ENCODE measurements at regions of chr11 and their contacts with region 1.

Region 1: DNA sequence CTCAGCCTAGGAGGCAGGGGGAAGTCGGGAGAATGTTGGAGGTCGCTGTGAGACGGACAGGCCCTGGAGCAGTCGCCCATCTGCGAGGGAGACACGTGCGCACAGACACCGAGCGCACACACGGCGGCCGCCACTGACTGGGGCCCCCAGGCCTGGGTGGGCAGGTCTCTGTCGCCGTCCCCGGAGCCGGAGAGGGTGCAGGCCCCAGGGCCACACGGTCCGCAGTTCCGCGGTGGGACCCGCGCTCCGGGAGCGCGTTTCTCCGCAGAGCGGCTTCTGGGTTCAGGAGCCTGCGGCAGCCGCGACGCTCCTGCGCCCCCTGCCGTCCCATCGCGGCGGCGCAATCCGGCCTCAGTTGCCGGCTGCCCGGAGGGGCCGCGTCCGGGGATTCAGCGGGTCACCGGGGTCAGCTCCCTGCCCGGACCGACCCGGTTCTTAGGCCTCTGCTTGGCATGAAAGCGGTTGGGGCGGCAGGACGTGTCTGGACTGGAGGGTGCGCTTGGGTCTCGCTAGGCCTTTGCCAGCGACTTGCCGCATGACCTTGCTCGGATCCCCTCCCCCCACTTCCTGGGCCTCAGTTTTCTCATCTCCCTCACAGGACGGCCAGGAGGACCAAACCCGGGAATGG is 31.2 kb downstream of the PDE2A start:
- DNase-seq: peak; percentile 42 to 72 (median 61)
- H3K4me3 ChIP-seq: peak overlapping the region in 2 of 4 donors; percentile 67 to 69
- H3K27ac ChIP-seq: peak overlapping the region in 2 of 5 donors; percentile 9 to 75
- H3K4me1 ChIP-seq: peaks cover 13 to 17% of the 10 kb centered on the region in 2 donors
- H3K27me3 ChIP-seq: no peaks in the 10 kb centered on the region
- CTCF ChIP-seq: peak; percentile 87 to 98 (median 95)
- POLR2A ChIP-seq: no peak

Region 2: DNA sequence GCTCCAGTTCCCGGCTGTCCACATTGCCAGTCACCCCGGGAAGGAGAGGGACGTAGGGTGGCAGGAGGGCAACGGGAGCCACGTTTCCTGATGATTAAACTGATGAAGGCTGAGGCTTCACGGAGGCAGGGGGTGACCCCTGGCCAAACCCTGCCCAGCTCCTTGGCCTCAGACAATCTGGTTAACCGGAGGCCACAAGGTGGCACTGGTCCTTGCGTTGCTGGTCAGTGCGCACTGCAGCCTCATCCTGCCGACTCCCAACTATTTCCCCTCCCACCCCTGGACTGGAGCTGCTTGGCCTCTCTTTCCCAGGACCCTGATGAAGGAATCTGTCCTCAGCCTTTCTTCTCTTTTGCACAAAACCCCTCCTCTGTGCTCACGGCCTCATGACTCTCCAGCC is 44.1 kb before region 1 on chr11:
- intact Hi-C with region 1: loop called (anchors 2 to 5 kb)
- DNase-seq: peak; percentile 62 to 88 (median 80)
- H3K4me3 ChIP-seq: no peak overlapping the region
- H3K27ac ChIP-seq: no peak overlapping the region
- H3K4me1 ChIP-seq: peaks cover 5 to 8% of the 10 kb centered on the region in 2 donors
- H3K27me3 ChIP-seq: no peaks in the 10 kb centered on the region
- CTCF ChIP-seq: peak; percentile 44 to 76 (median 72)
- POLR2A ChIP-seq: no peak

Measured in adrenal gland (tissue), 19 donors.